H1 (cell line): ENCODE measurements at regions of chr1 and their contacts with region 1.

Region 1: DNA sequence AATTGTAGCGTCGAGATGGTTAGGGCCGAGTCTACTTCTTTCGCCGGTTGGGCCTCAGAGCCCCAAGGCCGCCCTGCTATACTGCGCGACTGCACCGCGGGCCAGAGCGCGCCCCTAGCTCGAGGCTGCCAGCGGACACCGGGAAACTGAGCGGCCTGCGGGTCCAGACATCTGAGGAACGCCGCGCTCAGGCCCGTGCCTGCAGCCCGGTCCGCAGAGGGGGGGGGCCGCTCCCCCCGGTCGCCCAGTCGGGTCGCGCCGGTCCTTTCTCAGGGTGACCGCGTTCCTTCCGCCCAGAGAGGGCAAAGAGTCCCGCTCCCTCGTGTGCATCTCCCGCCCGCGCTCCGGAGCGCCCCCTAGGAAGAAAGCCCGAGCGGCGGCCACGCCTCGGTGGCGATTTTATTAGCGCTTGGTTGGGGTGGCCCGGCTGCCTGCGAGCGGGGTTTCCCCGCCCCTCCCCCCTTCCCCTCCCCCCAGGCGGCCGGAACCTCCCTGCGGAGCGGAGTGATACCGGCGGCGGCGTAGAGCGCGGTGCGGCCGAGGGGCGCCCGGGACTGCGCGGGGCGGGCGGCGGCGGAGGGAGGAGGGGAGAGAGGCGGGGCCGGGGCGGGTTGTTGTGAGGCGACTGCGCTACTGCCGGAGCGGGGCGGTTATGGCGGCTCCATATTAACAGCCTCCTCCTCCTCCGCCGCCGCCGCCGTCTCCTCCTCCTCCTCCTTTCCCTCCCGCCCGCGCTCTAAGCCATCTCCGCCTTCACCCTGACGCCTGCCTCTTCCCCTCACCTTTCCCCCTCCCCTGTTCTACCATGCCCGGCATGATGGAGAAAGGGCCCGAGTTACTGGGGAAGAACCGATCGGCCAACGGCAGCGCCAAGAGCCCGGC is at the start of gene RCOR3:
- DNase-seq: peak; percentile 70 to 95
- H3K4me3 ChIP-seq: peak within 1 kb of the TSS; percentile 77 to 88 (median 84)
- H3K27ac ChIP-seq: peak within 1 kb of the TSS; percentile 97
- H3K4me1 ChIP-seq: no peaks in the 10 kb centered on the region; a peak in 1 of 7 replicates
- H3K27me3 ChIP-seq: no peaks in the 10 kb centered on the region
- CTCF ChIP-seq: peak; percentile 55 to 68 (median 62); a peak in 3 of 4 replicates
- EP300 ChIP-seq: 0 out of 3 replicates have a peak, but pooled peaks of 1 of the 2 experiments have one; percentile 19
- POLR2A ChIP-seq: peak; percentile 66 to 83
- RAD21 ChIP-seq: peak; percentile 29 to 38; a peak in 2 of 4 replicates
- total RNA-seq, gene RCOR3: 28.0 and 36.3 TPM in 2 replicates

Region 2: GRCh38 chr1:211210052-211210451 is 48.9 kb before region 1 on chr1:
- CTCF ChIA-PET with region 1: no interaction called
- POLR2A ChIA-PET with region 1: no interaction called
- DNase-seq: no peak
- H3K4me3 ChIP-seq: no peak overlapping the region
- H3K27ac ChIP-seq: no peak overlapping the region
- H3K4me1 ChIP-seq: no peaks in the 10 kb centered on the region
- H3K27me3 ChIP-seq: no peaks in the 10 kb centered on the region
- CTCF ChIP-seq: no peak
- EP300 ChIP-seq: no peak
- POLR2A ChIP-seq: no peak
- RAD21 ChIP-seq: no peak

Region 3: GRCh38 chr1:211247921-211248320 is 11.1 kb before region 1 on chr1:
- CTCF ChIA-PET with region 1: interaction called, 4 read pairs
- POLR2A ChIA-PET with region 1: interaction called, 21 read pairs
- DNase-seq: peak in 1 of 2 experiments; percentile 29
- H3K4me3 ChIP-seq: no peak overlapping the region
- H3K27ac ChIP-seq: peak overlapping the region; percentile 40; the same call in 1 of the 2 replicates
- H3K4me1 ChIP-seq: peaks cover 0 to 9% (median 5%) of the 10 kb centered on the region in 4 experiments; a peak in 5 of 7 replicates
- H3K27me3 ChIP-seq: no peaks in the 10 kb centered on the region
- CTCF ChIP-seq: no peak
- EP300 ChIP-seq: no peak
- POLR2A ChIP-seq: no peak
- RAD21 ChIP-seq: no peak